GM10248 (cell line): ENCODE measurements at regions of chr6 and their contacts with region 1.

Region 1: DNA sequence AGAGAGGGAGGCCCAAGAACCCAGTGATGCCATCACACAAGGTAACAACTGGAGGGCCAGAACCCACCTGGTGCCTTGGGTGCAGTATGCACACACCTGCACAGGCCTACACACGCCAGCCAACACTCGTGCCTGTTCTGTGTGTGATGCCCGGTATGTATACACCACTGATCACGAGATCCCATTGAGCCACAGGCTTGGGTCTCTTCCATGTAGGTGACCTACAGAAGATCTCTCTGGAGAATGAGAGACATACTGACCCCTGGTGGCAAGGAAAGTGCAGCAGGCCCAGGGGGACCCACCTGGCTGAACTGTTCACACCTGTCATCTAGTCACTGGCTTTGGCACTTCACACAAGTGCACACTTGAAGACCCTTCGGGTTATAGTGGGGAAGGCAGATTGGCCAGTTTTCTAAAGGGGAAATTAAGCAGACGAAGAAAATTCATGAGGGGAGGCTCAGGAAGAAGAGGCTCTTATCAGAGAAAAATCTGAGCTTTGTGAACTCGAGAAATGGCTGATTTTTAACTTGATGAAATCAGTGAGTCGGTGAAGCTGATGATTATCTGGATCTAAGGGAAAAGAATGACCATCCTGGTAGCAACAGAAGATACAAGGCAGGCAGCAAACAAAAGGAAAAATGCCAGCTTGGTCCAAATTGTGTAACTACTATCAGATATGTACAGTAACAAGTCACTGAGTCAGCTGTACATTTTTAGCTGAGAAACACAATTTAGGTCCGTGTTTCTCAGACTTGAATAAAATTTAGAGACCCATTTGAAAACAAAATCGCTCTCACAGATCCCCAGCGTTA is 69.1 kb upstream of the PBOV1 start:
- DNase-seq: peak; percentile 63
- CTCF ChIP-seq: peak; percentile 79

Region 2: GRCh38 chr6:138211027-138211581 is 76.2 kb before region 1 on chr6:
- CTCF ChIA-PET with region 1: no interaction called
- POLR2A ChIA-PET with region 1: no interaction called
- DNase-seq: no peak
- CTCF ChIP-seq: no peak

Region 3: GRCh38 chr6:138258991-138259390 is 28.4 kb before region 1 on chr6:
- CTCF ChIA-PET with region 1: no interaction called
- POLR2A ChIA-PET with region 1: no interaction called
- DNase-seq: no peak
- CTCF ChIP-seq: no peak

Region 4: GRCh38 chr6:138301626-138302025 is 14.3 kb after region 1 on chr6:
- CTCF ChIA-PET with region 1: interaction called, 10 read pairs
- POLR2A ChIA-PET with region 1: no interaction called
- DNase-seq: no peak
- CTCF ChIP-seq: no peak

Region 5: GRCh38 chr6:138785980-138786379 is 498.6 kb after region 1 on chr6:
- CTCF ChIA-PET with region 1: no interaction called
- POLR2A ChIA-PET with region 1: no interaction called
- DNase-seq: no peak
- CTCF ChIP-seq: no peak

Region 6: DNA sequence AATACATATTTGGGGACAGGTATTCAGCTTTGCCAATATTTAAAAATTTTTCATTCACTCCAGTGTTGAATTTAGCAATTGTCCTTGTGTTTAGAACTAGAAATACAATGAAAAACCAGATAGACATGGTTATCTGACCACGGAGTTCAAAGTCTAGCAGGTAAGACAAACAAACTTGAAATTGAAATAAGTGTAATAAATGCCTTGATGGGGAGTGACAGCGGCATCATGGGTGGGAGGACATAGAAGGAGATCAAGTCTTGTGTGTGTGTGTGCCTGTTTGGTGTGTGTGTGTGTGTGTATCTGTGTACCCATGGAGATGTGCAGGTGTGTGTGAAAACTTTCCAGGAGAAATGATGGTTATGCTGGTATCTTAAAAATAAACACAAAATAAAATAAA is 1837.1 kb after region 1 on chr6:
- CTCF ChIA-PET with region 1: no interaction called
- POLR2A ChIA-PET with region 1: no interaction called
- DNase-seq: no peak
- CTCF ChIP-seq: no peak